Endothelial cell of umbilical vein (primary cell): ENCODE measurements at regions of chr19 and their contacts with region 1.

Region 1: GRCh38 chr19:4638828-4639530 is at the start of gene TNFAIP8L1:
- DNase-seq: peak; percentile 94
- H3K4me3 ChIP-seq: peak within 1 kb of the TSS; percentile 68 to 79 (median 69)
- H3K27ac ChIP-seq: peak within 1 kb of the TSS; percentile 48
- H3K4me1 ChIP-seq: peaks cover 41% of the 10 kb centered on the region
- H3K27me3 ChIP-seq: no peaks in the 10 kb centered on the region
- CTCF ChIP-seq: no peak
- POLR2A ChIP-seq: no peak
- total RNA-seq, gene TNFAIP8L1: 53.7 and 56.1 TPM in 2 replicates

Region 2: DNA sequence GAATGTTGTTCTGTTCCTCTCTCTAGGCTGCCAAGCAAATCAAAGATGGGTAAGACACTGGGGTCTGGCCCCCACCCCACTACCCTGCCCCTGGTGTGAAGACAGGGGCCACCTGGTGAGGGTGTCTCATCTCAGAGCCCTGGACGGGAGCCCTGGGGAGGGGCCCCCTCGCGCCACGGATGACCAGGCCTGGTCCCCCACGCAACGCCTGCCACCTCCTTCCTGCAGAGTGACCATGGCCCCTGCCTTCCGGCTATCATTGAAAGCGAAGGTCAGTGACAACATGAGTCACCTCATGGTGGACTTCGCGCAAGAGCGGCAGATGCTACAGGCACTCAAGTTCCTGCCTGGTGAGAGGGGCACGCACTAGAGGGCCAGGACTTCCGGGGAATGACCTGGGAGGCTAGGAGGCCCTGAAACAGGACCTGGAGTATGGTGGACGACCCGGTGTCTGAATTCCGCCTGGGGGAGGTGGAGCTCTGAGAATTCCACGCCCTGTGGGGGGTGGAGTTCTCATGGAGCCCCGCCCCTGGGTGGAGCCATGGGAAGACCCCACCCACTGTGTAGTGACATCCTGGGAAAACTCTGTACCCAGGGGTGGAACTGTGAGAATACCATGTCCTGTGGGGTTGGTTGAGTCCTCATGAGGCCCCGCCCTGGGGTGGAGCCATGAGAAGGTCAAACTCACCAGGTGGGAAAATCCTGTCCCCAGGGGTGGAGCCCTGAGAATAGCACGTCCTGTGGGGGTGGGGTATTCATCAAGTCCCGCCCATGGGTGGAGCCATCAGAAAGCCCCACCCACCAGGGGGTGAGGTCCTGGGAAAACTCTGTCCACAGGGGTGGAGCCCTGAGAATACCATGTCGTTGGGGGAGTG is 328.5 kb before region 1 on chr19:
- CTCF ChIA-PET with region 1: no interaction called
- POLR2A ChIA-PET with region 1: no interaction called
- dilution Hi-C with region 1: no loop called
- intact Hi-C with region 1: no loop called
- DNase-seq: no peak
- H3K4me3 ChIP-seq: no peak overlapping the region
- H3K27ac ChIP-seq: no peak overlapping the region
- H3K4me1 ChIP-seq: no peaks in the 10 kb centered on the region
- H3K27me3 ChIP-seq: no peaks in the 10 kb centered on the region
- CTCF ChIP-seq: no peak
- POLR2A ChIP-seq: no peak

Region 3: GRCh38 chr19:4471403-4472173 is 167.4 kb before region 1 on chr19:
- CTCF ChIA-PET with region 1: interaction called, 5 read pairs
- POLR2A ChIA-PET with region 1: no interaction called
- dilution Hi-C with region 1: no loop called
- intact Hi-C with region 1: loop called (anchors 5 kb)
- DNase-seq: peak; percentile 100
- H3K4me3 ChIP-seq: peak overlapping the region; percentile 18 to 54 (median 34)
- H3K27ac ChIP-seq: peak overlapping the region; percentile 68
- H3K4me1 ChIP-seq: peaks cover 12% of the 10 kb centered on the region
- H3K27me3 ChIP-seq: no peaks in the 10 kb centered on the region
- CTCF ChIP-seq: no peak
- POLR2A ChIP-seq: peak; percentile 54

Region 4: GRCh38 chr19:4524808-4525562 is 114.0 kb before region 1 on chr19:
- CTCF ChIA-PET with region 1: interaction called, 65 read pairs
- POLR2A ChIA-PET with region 1: interaction called, 3 read pairs
- dilution Hi-C with region 1: no loop called
- intact Hi-C with region 1: loop called (anchors 1 kb)
- DNase-seq: peak; percentile 31
- H3K4me3 ChIP-seq: no peak overlapping the region
- H3K27ac ChIP-seq: no peak overlapping the region
- H3K4me1 ChIP-seq: no peaks in the 10 kb centered on the region
- H3K27me3 ChIP-seq: no peaks in the 10 kb centered on the region
- CTCF ChIP-seq: peak; percentile 68 to 93
- POLR2A ChIP-seq: no peak

Region 5: GRCh38 chr19:4567584-4568071 is 71.4 kb before region 1 on chr19:
- CTCF ChIA-PET with region 1: interaction called, 66 read pairs
- POLR2A ChIA-PET with region 1: no interaction called
- dilution Hi-C with region 1: no loop called
- intact Hi-C with region 1: no loop called
- DNase-seq: peak; percentile 91
- H3K4me3 ChIP-seq: no peak overlapping the region
- H3K27ac ChIP-seq: peak overlapping the region; percentile 52
- H3K4me1 ChIP-seq: peaks cover 19% of the 10 kb centered on the region
- H3K27me3 ChIP-seq: no peaks in the 10 kb centered on the region
- CTCF ChIP-seq: peak; percentile 94 to 98
- POLR2A ChIP-seq: peak; percentile 24

Region 6: DNA sequence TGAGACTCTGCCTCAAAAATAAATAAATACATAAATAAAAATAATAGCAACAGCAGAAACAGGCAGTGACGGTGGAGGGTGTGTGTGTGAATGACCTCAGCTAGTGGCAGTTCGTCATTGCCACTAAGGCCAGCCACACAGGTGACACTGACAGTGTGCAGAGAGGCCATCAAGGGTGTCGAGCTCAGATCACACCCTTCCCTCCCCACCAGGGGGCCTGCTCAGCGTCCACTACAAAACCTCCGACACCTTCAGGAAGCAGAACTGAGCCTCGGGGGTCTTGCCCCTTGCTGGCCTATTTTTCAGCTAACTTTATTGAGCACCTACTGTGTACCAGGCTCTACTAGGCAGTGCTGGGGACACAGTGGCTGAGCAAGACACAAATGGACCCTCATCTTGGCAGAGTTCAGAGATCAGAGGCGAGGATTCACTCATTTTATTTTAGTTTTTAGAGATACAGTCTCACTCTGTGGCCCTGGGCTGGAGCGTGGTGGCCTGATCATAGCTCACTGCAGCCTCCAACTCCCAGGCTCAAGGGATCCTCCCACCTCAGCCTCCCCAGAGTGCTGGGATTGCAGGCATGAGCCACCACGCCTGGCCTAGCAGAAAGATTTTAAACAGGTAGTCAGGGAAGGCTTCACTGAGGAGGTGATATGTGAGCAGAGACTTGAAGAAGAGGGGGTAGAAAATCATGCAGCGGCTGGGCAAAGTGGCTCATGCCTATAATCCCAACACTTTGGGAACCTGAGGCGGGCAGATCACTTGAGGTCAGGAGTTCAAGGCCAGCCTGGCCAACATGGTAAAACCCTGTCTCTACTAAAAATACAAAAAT is 49.2 kb before region 1 on chr19:
- CTCF ChIA-PET with region 1: interaction called, 57 read pairs
- POLR2A ChIA-PET with region 1: no interaction called
- dilution Hi-C with region 1: no loop called
- intact Hi-C with region 1: no loop called
- DNase-seq: peak; percentile 19
- H3K4me3 ChIP-seq: no peak overlapping the region
- H3K27ac ChIP-seq: no peak overlapping the region
- H3K4me1 ChIP-seq: no peaks in the 10 kb centered on the region
- H3K27me3 ChIP-seq: peaks cover 0 to 3% of the 10 kb centered on the region in 2 experiments
- CTCF ChIP-seq: peak; percentile 35 to 69
- POLR2A ChIP-seq: no peak